Naive thymus-derived CD4-positive, alpha-beta T cell (primary cell): ENCODE measurements at regions of chr14 and their contacts with region 1.

Region 1: DNA sequence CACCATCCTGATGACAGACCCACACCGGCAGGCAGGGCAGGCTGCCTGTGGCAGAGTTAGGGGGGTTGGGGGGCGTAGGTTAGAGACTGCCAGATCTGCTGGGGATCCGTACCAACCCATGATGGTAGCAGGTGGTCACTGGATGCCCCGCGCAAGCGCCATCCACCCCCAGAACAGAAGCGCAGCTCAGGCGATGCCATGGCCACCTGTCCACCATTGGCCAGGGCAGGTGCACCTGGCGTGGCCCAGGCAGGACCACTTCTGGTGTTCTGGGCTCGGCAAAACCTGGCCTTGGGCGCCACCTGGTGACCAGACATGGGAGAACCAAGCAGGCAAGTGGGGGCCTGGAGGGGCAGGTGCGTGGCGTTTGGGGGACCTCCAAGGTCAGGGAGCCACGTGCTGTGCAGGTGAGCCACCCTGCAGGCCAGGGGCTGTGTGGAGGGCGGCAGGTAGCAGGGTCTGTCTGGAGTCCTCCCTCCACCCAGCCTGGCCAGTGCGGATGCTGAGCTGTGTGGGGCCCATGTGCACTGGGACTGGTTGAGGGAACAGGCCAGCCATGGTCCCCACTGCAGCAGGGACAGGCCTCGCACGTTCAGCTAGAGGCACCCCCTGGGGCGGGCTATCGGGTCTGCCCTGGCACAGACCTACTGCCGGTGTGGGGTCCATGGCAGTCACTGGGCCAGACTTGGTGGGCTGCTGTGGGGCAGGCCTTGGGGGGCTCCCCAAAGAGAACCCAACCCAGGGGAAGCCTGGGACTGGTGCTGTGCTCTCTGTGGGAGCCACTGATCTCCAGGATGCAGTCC is 15.6 kb downstream of the BAG5 start:
- DNase-seq: peak; percentile 53 to 83 (median 70)
- ATAC-seq: peak; percentile 77
- H3K4me3 ChIP-seq: no peak overlapping the region
- H3K4me3 Mint-ChIP-seq: no peak overlapping the region
- H3K27ac ChIP-seq: no peak overlapping the region
- H3K27ac Mint-ChIP-seq: no peak overlapping the region
- H3K4me1 ChIP-seq: no peaks in the 10 kb centered on the region
- H3K4me1 Mint-ChIP-seq: peaks cover 0 to 5% (median 0%) of the 10 kb centered on the region in 7 donors
- H3K27me3 ChIP-seq: no peaks in the 10 kb centered on the region
- H3K27me3 Mint-ChIP-seq: no peaks in the 10 kb centered on the region

Region 2: DNA sequence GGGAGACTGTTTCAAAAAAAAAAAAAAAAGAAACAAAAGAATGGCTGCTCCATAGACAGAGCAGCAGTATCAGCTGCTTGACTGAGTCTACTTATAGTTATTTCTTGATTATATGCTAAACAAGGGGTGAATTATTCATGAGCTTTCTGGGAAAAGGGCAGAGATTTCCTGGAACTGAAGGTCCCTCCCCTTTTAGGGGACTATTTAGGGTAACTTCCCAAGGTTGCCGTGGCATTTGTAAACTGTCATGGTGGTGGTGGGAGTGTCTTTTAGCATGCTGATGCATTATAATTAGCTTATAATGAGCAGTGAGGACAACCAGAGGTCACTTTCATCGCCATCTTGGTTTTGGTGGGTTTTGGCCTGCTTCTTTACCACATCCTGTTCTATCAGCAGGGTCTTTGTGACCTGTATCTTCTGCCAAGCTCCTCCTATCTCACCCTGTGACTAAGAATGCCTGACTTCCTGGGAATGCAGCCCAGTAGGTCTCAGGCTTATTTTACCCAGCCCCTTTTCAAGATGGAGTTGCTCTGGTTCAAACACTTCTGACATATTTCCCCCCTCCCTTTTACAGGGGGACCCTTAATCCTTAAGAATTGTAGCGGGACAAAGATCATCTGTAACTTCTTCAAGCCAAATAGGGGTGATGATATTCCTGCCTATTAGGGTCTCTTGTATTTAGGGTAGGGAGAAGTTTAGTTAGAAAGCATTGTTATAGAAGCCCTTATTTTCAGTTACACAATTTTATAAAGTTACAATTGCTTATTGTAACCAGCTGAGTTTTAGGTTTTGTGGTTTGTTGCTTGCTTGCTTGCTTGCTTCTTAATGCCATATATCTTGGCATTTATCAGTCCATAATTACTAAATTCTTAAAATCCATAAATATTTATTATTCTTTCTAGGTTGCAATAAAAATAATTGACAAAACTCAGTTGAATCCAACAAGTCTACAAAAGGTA is 119.1 kb before region 1 on chr14:
- CTCF ChIA-PET with region 1: no interaction called
- POLR2A ChIA-PET with region 1: no interaction called
- intact Hi-C with region 1: no loop called
- DNase-seq: peak in 1 of 9 donors; percentile 3
- ATAC-seq: peak; percentile 20
- H3K4me3 ChIP-seq: no peak overlapping the region
- H3K4me3 Mint-ChIP-seq: no peak overlapping the region
- H3K27ac ChIP-seq: no peak overlapping the region
- H3K27ac Mint-ChIP-seq: peak overlapping the region in 4 of 9 donors; percentile 20 to 75 (median 50)
- H3K4me1 ChIP-seq: peaks cover 12 to 21% of the 10 kb centered on the region in 2 donors
- H3K4me1 Mint-ChIP-seq: peaks cover 20 to 63% (median 38%) of the 10 kb centered on the region in 7 donors
- H3K27me3 ChIP-seq: no peaks in the 10 kb centered on the region
- H3K27me3 Mint-ChIP-seq: no peaks in the 10 kb centered on the region

Region 3: DNA sequence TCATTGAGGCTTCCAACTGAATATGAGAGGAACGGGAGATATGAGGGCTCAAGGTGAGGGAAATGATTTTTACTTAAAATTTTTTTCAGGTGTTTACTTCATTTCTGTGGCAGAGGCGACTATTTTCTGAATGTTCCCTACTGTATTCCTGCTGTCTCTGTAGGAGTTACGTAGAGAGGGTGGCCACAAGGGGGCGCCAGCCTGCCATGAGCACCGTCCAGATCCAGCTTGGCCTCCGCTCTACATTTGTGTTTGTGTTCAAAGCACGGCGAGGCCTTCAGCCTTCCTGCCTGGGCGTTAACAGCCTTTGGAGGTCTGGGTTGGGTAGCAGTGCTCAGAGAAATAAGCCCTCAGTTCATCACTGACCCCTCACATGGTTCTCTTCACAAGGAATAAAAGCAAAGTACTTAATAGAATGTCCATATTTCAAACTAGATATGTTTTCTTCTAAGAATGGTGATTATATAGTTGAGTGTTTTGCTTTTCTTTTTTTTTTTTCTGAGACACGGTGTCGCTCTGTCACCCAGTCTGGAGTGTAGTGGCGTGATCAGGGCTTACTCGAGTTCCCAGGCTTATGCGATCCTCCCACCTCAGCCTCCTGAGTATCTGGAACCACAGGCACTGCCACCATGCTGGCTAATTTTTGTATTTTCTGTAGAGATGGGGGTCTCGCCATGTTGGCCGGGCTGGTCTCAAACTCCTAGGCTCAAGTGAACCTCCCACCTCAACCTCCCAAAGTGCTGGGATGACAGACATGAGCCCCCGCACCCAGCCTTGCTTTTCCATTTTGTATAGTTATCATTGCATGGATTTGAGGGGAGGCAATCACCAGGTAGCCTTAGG is 46.5 kb before region 1 on chr14:
- CTCF ChIA-PET with region 1: interaction called, 5 read pairs
- POLR2A ChIA-PET with region 1: no interaction called
- intact Hi-C with region 1: loop called (anchors 1 kb)
- DNase-seq: peak; percentile 57 to 77 (median 72)
- ATAC-seq: peak; percentile 96
- H3K4me3 ChIP-seq: no peak overlapping the region
- H3K4me3 Mint-ChIP-seq: no peak overlapping the region
- H3K27ac ChIP-seq: no peak overlapping the region
- H3K27ac Mint-ChIP-seq: peak overlapping the region in 8 of 9 donors; percentile 6 to 89 (median 51)
- H3K4me1 ChIP-seq: no peaks in the 10 kb centered on the region
- H3K4me1 Mint-ChIP-seq: peaks cover 6 to 12% (median 9%) of the 10 kb centered on the region in 7 donors
- H3K27me3 ChIP-seq: no peaks in the 10 kb centered on the region
- H3K27me3 Mint-ChIP-seq: no peaks in the 10 kb centered on the region

Region 4: GRCh38 chr14:103520657-103521437 is 26.0 kb before region 1 on chr14:
- CTCF ChIA-PET with region 1: interaction called, 4 read pairs
- POLR2A ChIA-PET with region 1: interaction called, 3 read pairs
- intact Hi-C with region 1: loop called (anchors 1 kb)
- DNase-seq: peak; percentile 48 to 72 (median 60)
- ATAC-seq: peak; percentile 85
- H3K4me3 ChIP-seq: peak overlapping the region; percentile 37
- H3K4me3 Mint-ChIP-seq: peak overlapping the region; percentile 18 to 77 (median 64)
- H3K27ac ChIP-seq: no peak overlapping the region
- H3K27ac Mint-ChIP-seq: no peak overlapping the region
- H3K4me1 ChIP-seq: peaks cover 7 to 15% of the 10 kb centered on the region in 2 donors
- H3K4me1 Mint-ChIP-seq: peaks cover 0 to 21% (median 13%) of the 10 kb centered on the region in 7 donors
- H3K27me3 ChIP-seq: no peaks in the 10 kb centered on the region
- H3K27me3 Mint-ChIP-seq: peaks cover 0 to 33% (median 6%) of the 10 kb centered on the region in 5 donors

Region 5: DNA sequence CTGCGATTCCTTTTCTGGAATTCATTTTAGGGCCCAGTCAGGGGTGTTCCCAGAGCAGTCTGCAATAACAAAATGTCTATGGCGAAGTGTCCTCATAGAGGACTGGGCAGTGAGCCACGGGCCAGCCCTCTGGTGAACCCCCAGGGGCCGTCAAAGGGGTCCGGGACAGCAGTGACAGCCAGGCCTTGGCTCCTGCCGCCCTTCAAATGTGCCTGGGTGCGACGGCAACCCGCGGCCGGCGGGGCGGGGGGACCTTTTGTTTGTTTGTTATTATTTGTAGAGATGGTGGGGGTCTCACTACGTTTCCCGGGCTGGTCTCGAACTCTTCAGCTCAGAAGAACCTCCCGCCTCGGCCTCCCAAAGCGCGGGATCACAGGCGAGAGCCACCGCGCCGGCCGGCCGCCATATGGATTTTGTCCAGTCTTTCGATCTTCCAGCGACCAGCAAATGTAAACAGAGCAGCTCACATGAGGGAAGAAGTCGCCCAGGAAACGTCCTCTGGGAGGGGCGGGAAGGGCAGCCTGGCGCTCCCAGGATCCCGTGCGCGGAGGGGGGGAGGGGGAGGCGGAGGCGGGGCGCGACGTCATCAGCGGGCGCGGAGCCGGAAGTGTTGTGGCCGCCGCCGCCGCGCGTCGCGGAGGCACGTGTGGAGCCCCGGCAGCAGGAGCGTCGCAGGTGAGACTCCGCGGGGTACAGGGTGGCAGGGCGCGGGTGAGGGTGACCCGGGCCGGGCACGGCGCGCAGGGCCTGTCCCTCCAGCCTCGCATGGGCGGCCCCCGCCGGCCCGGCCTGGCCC is 18.1 kb before region 1 on chr14 and contains the start of gene TRMT61A:
- CTCF ChIA-PET with region 1: interaction called, 12 read pairs
- POLR2A ChIA-PET with region 1: interaction called, 3 read pairs
- intact Hi-C with region 1: no loop called
- DNase-seq: peak; percentile 58 to 80 (median 74)
- ATAC-seq: peak; percentile 85
- H3K4me3 ChIP-seq: peak within 1 kb of the TSS; percentile 96
- H3K4me3 Mint-ChIP-seq: peak within 1 kb of the TSS; percentile 89 to 97 (median 95)
- H3K27ac ChIP-seq: peak within 1 kb of the TSS; percentile 81
- H3K27ac Mint-ChIP-seq: peak within 1 kb of the TSS; percentile 91 to 98 (median 96)
- H3K4me1 ChIP-seq: peaks cover 19 to 21% of the 10 kb centered on the region in 2 donors
- H3K4me1 Mint-ChIP-seq: peaks cover 30 to 39% (median 35%) of the 10 kb centered on the region in 7 donors
- H3K27me3 ChIP-seq: no peaks in the 10 kb centered on the region
- H3K27me3 Mint-ChIP-seq: peaks cover 0 to 21% (median 1%) of the 10 kb centered on the region in 5 donors
- total RNA-seq, gene TRMT61A: 9.8 to 15.1 (median 14.1) TPM

Region 6: GRCh38 chr14:103634156-103634555 is 87.3 kb after region 1 on chr14:
- CTCF ChIA-PET with region 1: no interaction called
- POLR2A ChIA-PET with region 1: no interaction called
- intact Hi-C with region 1: no loop called
- DNase-seq: no peak
- ATAC-seq: no peak
- H3K4me3 ChIP-seq: no peak overlapping the region
- H3K4me3 Mint-ChIP-seq: peak overlapping the region in 8 of 10 donors; percentile 4 to 62 (median 45)
- H3K27ac ChIP-seq: no peak overlapping the region
- H3K27ac Mint-ChIP-seq: peak overlapping the region in 6 of 9 donors; percentile 0 to 71 (median 24)
- H3K4me1 ChIP-seq: peaks cover 22 to 37% of the 10 kb centered on the region in 2 donors
- H3K4me1 Mint-ChIP-seq: peaks cover 43 to 81% (median 60%) of the 10 kb centered on the region in 7 donors
- H3K27me3 ChIP-seq: no peaks in the 10 kb centered on the region
- H3K27me3 Mint-ChIP-seq: no peaks in the 10 kb centered on the region

Region 7: GRCh38 chr14:103688906-103689902 is 142.4 kb after region 1 on chr14:
- CTCF ChIA-PET with region 1: no interaction called
- POLR2A ChIA-PET with region 1: no interaction called
- intact Hi-C with region 1: no loop called
- DNase-seq: no peak
- ATAC-seq: no peak
- H3K4me3 ChIP-seq: no peak overlapping the region
- H3K4me3 Mint-ChIP-seq: no peak overlapping the region
- H3K27ac ChIP-seq: no peak overlapping the region
- H3K27ac Mint-ChIP-seq: peak overlapping the region in 1 of 9 donors; percentile 25
- H3K4me1 ChIP-seq: no peaks in the 10 kb centered on the region
- H3K4me1 Mint-ChIP-seq: peaks cover 0 to 4% (median 0%) of the 10 kb centered on the region in 7 donors
- H3K27me3 ChIP-seq: no peaks in the 10 kb centered on the region
- H3K27me3 Mint-ChIP-seq: no peaks in the 10 kb centered on the region

Region 8: DNA sequence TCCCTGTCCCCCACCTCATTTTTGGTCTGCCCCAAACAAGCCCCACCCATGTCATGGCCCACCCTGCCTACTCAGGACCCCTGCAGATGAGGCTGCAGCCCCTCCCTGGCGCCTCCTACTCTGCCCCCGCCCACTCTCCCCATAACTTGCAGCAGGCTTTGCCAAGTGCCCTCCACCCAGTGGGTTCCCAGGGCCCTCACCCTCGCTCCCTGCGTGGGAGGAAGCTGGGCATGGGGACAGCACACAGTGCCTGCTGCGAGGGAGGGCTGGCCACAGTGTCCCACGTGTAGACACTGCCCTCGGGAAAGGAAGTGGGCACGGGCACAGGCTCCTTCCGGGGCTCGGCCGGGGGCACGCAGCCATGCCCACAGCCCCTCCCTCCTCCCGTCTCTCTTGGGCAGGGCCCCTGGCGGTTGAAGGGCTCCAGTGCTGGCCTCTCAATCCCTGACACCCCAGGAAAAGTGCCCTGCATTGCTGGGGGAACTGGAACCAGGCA is 1239.3 kb after region 1 on chr14:
- CTCF ChIA-PET with region 1: no interaction called
- POLR2A ChIA-PET with region 1: no interaction called
- intact Hi-C with region 1: no loop called
- DNase-seq: no peak
- ATAC-seq: peak; percentile 60
- H3K4me3 ChIP-seq: no peak overlapping the region
- H3K4me3 Mint-ChIP-seq: peak overlapping the region in 2 of 10 donors; percentile 6 to 66
- H3K27ac ChIP-seq: peak overlapping the region; percentile 35
- H3K27ac Mint-ChIP-seq: peak overlapping the region in 3 of 9 donors; percentile 32 to 41 (median 38)
- H3K4me1 ChIP-seq: peaks cover 9 to 11% of the 10 kb centered on the region in 2 donors
- H3K4me1 Mint-ChIP-seq: peaks cover 0 to 26% (median 16%) of the 10 kb centered on the region in 7 donors
- H3K27me3 ChIP-seq: no peaks in the 10 kb centered on the region
- H3K27me3 Mint-ChIP-seq: no peaks in the 10 kb centered on the region